CD14-positive monocyte (primary cell): ENCODE measurements at regions of chr12 and their contacts with region 1.

Region 1: DNA sequence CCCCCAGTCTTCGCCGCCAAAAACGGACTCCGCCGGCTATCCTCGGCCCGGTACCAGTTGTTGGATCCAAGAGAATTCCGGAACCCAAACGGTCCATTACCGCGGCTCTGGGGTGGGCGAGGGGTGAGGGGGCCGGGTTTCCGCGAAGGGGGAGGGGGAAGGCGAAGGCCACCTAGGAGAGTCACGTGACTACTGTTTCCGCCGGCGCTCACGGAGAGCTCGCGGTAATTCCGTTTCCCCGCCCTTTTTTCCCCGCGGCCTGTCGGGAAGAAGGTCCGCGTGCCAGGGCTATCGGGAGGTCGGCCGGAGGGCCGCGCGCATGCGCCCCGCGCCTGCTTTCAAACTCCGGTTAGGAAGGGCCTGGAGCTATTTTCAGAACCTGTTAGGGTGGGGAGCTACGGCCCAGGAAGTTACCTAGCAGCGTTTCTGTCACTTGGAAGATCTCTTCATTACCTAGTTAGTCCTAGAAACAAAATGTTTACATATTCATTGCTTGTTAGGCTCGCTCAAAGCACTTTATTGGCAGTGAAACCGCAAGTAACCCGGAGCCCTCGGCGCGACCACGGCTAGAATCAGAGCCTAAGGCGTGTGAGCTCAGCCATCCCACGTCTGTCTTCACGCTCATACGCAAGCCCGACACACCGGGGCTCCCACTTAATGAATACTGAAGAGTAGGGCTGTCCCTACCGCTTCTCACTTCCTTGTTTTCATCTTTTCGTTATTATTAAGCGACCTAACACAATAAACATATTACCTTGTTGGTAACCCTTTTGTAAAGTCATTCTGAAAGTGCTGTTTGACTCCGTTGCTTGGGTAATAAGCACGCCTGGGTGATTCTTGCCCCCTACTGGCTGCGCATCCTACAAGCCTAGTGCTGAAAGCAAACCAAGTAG is 624 bp upstream of the SBNO1 start:
- DNase-seq: peak; percentile 97 to 99 (median 99)
- H3K4me3 ChIP-seq: peak overlapping the region; percentile 78 to 89 (median 87)
- H3K4me3 Mint-ChIP-seq: peak overlapping the region; percentile 91 to 94
- H3K27ac ChIP-seq: peak overlapping the region; percentile 93 to 96
- H3K27ac Mint-ChIP-seq: peak overlapping the region; percentile 97 to 99 (median 98)
- H3K4me1 ChIP-seq: peaks cover 25 to 28% of the 10 kb centered on the region in 2 donors
- H3K4me1 Mint-ChIP-seq: peaks cover 18% of the 10 kb centered on the region
- H3K27me3 ChIP-seq: no peaks in the 10 kb centered on the region
- H3K27me3 Mint-ChIP-seq: peaks cover 0 to 2% (median 2%) of the 10 kb centered on the region in 3 donors
- CTCF ChIP-seq: peak; percentile 82

Region 2: DNA sequence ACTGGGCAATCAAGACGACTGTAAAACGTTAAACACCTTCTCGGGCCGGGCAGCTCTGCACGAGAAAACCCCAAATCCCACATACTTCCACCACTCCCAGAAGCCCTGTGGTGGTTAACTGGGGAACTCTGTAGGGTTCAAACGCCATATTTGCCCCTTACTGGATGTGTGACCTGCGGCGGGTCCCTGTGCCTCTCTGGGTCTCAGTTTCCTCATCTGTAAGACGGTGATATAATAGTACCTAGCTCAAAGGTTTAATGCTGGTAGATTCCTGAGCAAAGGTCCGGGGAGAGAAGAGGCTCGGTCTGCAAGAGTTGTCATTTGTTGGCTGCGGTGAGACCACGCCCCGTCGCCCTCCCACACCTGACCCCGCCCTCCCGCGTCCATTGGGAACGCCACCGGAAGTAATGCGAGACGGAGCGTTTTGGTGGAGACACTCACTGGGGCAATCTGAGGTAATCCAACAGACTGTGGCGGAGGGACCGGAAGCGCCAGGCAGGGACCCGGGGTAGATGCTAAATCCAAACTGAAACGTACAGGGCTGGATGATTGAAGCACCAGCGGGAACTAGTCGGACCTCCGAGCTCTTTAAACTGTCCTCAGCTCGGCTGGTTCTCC is 390.9 kb before region 1 on chr12:
- intact Hi-C with region 1: loop called in 1 of 2 experiments (anchors 10 kb)
- DNase-seq: peak; percentile 95 to 98 (median 96)
- H3K4me3 ChIP-seq: peak overlapping the region; percentile 62 to 99 (median 84)
- H3K4me3 Mint-ChIP-seq: peak overlapping the region; percentile 97
- H3K27ac ChIP-seq: peak overlapping the region; percentile 94 to 97
- H3K27ac Mint-ChIP-seq: peak overlapping the region; percentile 97 to 100 (median 99)
- H3K4me1 ChIP-seq: peaks cover 28 to 33% of the 10 kb centered on the region in 2 donors
- H3K4me1 Mint-ChIP-seq: peaks cover 26% of the 10 kb centered on the region
- H3K27me3 ChIP-seq: no peaks in the 10 kb centered on the region
- H3K27me3 Mint-ChIP-seq: no peaks in the 10 kb centered on the region
- CTCF ChIP-seq: no peak

Region 3: GRCh38 chr12:123200414-123200813 is 164.9 kb before region 1 on chr12:
- intact Hi-C with region 1: no loop called
- DNase-seq: no peak
- H3K4me3 ChIP-seq: no peak overlapping the region
- H3K4me3 Mint-ChIP-seq: no peak overlapping the region
- H3K27ac ChIP-seq: no peak overlapping the region
- H3K27ac Mint-ChIP-seq: peak overlapping the region in 2 of 7 donors; percentile 5 to 16
- H3K4me1 ChIP-seq: no peaks in the 10 kb centered on the region
- H3K4me1 Mint-ChIP-seq: no peaks in the 10 kb centered on the region
- H3K27me3 ChIP-seq: no peaks in the 10 kb centered on the region
- H3K27me3 Mint-ChIP-seq: peaks cover 0 to 2% (median 0%) of the 10 kb centered on the region in 3 donors
- CTCF ChIP-seq: no peak

Region 4: DNA sequence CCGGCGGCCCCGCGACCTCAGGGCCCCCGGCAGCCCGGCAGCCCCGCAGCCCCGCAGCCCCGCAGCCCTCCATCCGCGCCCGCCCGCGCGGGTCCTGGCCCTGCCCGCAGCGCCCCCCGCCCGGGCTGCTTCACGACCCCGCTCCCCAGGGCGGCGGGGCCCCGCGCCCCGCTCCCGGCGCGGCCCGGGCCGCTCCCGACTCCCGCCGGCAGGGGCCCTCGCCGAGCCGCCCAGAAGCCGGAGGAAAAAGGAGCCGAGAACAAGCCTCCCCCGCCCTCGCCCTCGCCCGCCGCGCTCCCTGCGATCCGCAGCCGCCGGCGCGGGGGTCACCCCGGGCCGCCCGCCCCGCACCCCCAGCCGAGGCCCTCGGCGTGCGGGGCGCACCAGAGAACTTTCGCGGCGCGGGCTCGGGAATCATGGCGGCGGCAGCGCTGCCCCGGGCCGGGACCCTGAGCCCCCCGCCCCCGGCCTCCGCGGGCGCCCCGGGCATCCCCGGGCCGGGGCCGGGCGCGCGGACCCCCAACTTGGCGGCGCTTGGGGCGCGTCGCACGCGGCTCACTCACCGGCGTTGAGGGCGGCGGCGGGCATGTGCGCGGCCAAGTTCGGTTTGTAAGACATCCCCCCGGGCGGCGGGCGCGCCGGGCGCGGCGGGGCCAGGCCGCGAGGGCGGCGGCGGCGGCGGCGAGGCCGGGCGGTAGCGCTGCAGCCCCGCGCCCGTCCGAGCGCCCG is 94.1 kb before region 1 on chr12:
- intact Hi-C with region 1: no loop called
- DNase-seq: peak; percentile 40 to 60 (median 55)
- H3K4me3 ChIP-seq: peak overlapping the region in 2 of 3 experiments; percentile 29 to 84
- H3K4me3 Mint-ChIP-seq: no peak overlapping the region
- H3K27ac ChIP-seq: no peak overlapping the region
- H3K27ac Mint-ChIP-seq: no peak overlapping the region
- H3K4me1 ChIP-seq: peaks cover 37 to 44% of the 10 kb centered on the region in 2 donors
- H3K4me1 Mint-ChIP-seq: peaks cover 40% of the 10 kb centered on the region
- H3K27me3 ChIP-seq: peaks cover 0 to 2% of the 10 kb centered on the region in 2 donors
- H3K27me3 Mint-ChIP-seq: peaks cover 0 to 13% (median 0%) of the 10 kb centered on the region in 3 donors
- CTCF ChIP-seq: peak; percentile 43

Region 5: DNA sequence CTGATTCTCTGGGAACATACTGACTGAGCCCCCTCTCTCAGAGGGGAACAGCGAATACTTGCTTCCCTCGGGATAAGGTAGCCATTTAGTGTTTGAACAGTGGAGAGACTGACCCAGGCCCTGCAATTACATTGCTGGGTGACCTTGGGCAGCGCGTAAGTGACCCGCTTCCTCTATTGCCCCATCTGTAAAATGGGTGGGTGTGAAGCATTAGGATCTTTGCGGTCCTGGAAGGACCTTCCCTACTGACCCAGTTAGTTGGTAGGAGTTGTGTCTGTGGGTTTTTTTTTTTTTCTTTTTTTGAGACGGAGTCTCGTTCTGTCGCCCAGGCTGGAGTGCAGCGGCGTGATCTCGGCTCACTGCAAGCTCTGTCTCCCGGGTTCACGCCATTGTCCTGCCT is 17.4 kb after region 1 on chr12:
- intact Hi-C with region 1: loop called (anchors 2 kb)
- DNase-seq: no peak
- H3K4me3 ChIP-seq: no peak overlapping the region
- H3K4me3 Mint-ChIP-seq: no peak overlapping the region
- H3K27ac ChIP-seq: no peak overlapping the region
- H3K27ac Mint-ChIP-seq: peak overlapping the region in 1 of 7 donors; percentile 35
- H3K4me1 ChIP-seq: peaks cover 19 to 25% of the 10 kb centered on the region in 2 donors
- H3K4me1 Mint-ChIP-seq: peaks cover 20% of the 10 kb centered on the region
- H3K27me3 ChIP-seq: no peaks in the 10 kb centered on the region
- H3K27me3 Mint-ChIP-seq: no peaks in the 10 kb centered on the region
- CTCF ChIP-seq: no peak

Region 6: DNA sequence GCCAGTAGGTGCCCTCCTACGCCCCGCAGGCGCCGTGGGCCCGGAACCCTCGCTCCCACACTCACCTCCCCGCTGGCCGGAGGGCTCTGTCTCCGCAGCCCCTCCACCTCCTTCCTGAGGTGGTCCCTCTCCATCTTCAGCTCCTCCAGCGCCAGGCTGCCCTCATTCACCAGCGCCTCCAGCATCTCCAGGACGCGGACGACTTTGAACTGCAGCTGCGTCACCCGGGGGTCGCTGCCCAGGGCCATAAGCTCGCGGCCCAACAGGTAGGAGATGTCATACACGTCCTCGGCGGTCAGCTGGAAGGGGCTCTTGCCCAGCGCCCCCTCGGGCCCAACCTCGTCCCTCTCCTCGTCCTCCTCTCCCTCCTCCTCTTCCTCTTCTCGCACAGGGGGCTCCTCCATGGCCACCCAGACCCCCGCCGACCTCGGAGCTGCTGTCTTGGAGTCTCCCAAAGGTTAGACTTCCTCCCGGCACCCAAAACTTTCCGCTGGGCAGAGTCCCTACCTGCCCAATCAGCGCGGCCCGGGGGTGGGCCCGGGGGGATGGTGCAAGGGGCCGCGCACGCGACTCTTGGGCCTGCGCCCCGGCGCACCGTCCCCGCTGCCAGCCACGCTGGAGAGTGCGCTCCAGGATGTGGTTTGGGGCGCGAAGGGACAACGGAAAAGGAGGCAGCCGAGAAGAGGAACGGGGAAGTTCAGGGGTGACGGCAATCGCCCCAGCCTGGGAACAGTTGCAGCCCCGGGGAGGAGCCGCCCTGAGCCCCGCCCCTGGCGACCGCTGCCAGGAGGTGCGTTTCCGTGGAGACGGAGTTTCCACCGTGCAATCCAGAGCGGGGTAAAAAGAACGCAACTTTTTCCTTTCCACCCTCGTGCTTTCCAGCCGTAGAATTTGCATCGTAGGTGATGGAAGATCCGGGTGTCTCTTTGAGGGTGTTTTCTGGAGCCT is 71.0 kb after region 1 on chr12 and contains the start of gene RILPL2:
- intact Hi-C with region 1: loop called in 1 of 2 experiments (anchors 2 kb)
- DNase-seq: peak; percentile 96 to 99 (median 98)
- H3K4me3 ChIP-seq: peak within 1 kb of the TSS; percentile 72 to 98 (median 93)
- H3K4me3 Mint-ChIP-seq: peak within 1 kb of the TSS; percentile 98 to 99
- H3K27ac ChIP-seq: peak within 1 kb of the TSS; percentile 96 to 97
- H3K27ac Mint-ChIP-seq: peak within 1 kb of the TSS; percentile 98 to 100 (median 99)
- H3K4me1 ChIP-seq: peaks cover 52 to 55% of the 10 kb centered on the region in 2 donors
- H3K4me1 Mint-ChIP-seq: peaks cover 56% of the 10 kb centered on the region
- H3K27me3 ChIP-seq: no peaks in the 10 kb centered on the region
- H3K27me3 Mint-ChIP-seq: no peaks in the 10 kb centered on the region
- CTCF ChIP-seq: no peak
- polyA plus RNA-seq, gene RILPL2: 19.3 to 25.1 (median 21.0) TPM

Region 7: GRCh38 chr12:123468562-123469185 is 103.4 kb after region 1 on chr12:
- intact Hi-C with region 1: no loop called
- DNase-seq: peak in 2 of 3 donors; percentile 38 to 50
- H3K4me3 ChIP-seq: no peak overlapping the region
- H3K4me3 Mint-ChIP-seq: no peak overlapping the region
- H3K27ac ChIP-seq: no peak overlapping the region
- H3K27ac Mint-ChIP-seq: peak overlapping the region in 2 of 7 donors; percentile 25 to 45
- H3K4me1 ChIP-seq: no peaks in the 10 kb centered on the region
- H3K4me1 Mint-ChIP-seq: no peaks in the 10 kb centered on the region
- H3K27me3 ChIP-seq: no peaks in the 10 kb centered on the region
- H3K27me3 Mint-ChIP-seq: no peaks in the 10 kb centered on the region
- CTCF ChIP-seq: peak; percentile 45